ENCODE measurements at regions of chr13 and their contacts with region 1.

Region 1: GRCh38 chr13:51452361-51453206 is at the start of gene INTS6:
- DNase-seq: peak; percentile 97
- H3K4me3 ChIP-seq: peak within 1 kb of the TSS; percentile 78
- CTCF ChIP-seq: no peak

Region 2: GRCh38 chr13:51520524-51520923 is 67.9 kb after region 1 on chr13:
- CTCF ChIA-PET with region 1: no interaction called
- POLR2A ChIA-PET with region 1: interaction called, 13 read pairs
- DNase-seq: no peak
- H3K4me3 ChIP-seq: no peak overlapping the region
- CTCF ChIP-seq: no peak

Region 3: GRCh38 chr13:51583875-51584730 is 131.5 kb after region 1 on chr13 and contains the start of gene WDFY2:
- CTCF ChIA-PET with region 1: no interaction called
- POLR2A ChIA-PET with region 1: interaction called, 46 read pairs
- DNase-seq: peak; percentile 98
- H3K4me3 ChIP-seq: peak within 1 kb of the TSS; percentile 92
- CTCF ChIP-seq: peak; percentile 51

Region 4: DNA sequence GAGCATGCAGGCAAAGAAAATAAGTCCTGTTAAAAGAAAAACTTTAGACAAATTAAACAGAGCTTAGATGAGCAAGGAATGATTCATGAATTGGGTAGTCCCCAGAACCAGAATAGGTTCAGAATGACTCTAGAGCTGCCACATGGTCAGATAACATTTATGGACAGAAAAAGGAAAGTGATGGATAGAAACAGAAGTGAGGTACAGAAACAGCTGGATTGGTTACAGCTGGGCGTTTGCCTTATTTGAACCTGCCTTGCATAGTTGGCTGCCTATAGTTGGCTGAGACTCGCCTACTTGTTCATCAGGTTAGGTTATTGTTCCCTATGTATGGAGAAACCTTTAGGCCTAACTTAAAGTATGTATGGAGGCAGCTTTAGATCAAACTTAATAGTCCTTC is 167.0 kb after region 1 on chr13:
- CTCF ChIA-PET with region 1: interaction called, 3 read pairs
- POLR2A ChIA-PET with region 1: interaction called, 11 read pairs
- DNase-seq: no peak
- H3K4me3 ChIP-seq: no peak overlapping the region
- CTCF ChIP-seq: no peak

Region 5: DNA sequence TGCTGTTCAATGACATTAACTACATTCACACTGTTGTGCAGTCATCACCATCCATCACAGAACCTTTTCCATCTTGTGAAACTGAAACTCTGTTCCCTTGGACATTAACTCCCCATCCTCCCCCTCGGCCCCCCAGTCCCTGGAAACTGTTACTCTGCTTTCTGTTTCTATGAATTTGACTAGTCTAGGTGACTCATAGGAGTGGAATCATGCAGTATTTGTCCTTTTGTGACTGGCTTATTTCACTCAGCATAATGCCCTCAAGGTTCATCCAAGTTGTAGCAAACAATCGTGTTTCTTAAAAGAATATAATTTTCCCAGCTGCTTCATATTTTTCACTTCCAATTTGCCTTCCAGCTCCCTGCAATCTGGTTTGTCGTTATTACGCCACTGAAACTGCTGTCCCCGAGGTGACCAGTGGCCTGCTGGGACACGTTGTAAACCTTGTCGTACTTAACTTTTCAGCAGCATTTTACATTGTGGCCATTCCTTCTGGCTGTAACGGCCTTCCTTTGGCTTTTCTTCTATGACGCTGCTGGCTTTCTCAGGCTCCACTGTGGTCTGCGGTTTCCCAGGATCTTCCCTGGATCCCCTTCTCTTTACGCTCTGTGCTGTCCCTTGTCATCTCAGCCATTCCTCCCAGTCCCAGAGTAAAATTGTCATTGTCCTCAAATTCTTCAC is 277.4 kb after region 1 on chr13:
- CTCF ChIA-PET with region 1: interaction called, 4 read pairs
- POLR2A ChIA-PET with region 1: interaction called, 13 read pairs
- DNase-seq: peak; percentile 53
- H3K4me3 ChIP-seq: no peak overlapping the region
- CTCF ChIP-seq: no peak

Region 6: DNA sequence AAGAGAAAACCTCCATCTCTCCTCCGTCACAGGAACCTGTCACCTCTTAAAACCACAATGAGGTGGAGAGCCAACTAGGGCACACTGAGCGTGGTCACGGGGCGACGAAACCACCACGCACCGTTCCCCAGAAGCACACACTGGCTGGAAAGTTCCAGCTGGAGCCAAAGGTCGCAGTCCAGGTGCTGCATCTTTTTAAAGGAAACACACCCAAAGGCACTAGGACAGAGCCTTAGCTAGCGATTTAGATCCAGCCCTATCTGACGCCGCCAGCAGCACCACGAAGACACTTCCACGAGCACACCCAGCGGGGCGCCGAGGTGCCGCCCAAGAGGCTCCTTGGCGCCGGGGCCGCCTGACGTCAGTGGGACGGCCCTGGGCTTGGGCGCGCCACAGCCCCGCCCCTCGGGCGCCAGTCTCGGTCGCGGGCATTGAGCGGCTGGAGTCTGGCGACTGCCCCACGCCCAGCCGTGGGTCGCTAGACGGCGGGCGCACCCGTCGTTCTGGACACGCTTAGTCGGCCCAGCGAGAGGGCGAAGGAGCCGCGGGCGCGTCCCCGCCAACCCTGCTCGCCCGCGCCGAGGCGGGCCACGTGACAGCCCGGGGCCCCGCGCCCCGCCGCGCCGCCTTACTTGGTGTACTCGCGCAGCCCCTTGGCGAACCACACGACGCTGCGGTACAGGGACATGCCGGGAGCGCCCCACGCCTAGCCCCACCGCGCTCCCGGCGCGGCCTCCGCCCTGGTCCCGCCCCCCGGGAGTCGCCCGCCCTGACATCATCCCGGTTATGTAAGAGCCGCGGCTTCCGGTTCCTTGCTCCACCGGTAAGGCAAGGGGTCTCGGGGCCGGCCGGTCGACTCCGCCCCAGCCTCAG is 351.1 kb after region 1 on chr13 and contains the start of gene DHRS12:
- CTCF ChIA-PET with region 1: interaction called, 5 read pairs
- POLR2A ChIA-PET with region 1: interaction called, 13 read pairs
- DNase-seq: no peak
- H3K4me3 ChIP-seq: peak within 1 kb of the TSS; percentile 74
- CTCF ChIP-seq: no peak